ENCODE measurements at regions of chr12 and their contacts with region 1.

Region 1: GRCh38 chr12:121773011-121773777 is 20.3 kb downstream of the RHOF start:
- DNase-seq: peak; percentile 48 to 88 (median 74)
- ATAC-seq: peak; percentile 70 to 87 (median 81)
- H3K4me3 ChIP-seq: no peak overlapping the region
- H3K4me3 Mint-ChIP-seq: no peak overlapping the region
- H3K27ac ChIP-seq: peak overlapping the region; percentile 47
- H3K27ac Mint-ChIP-seq: peak overlapping the region; percentile 31 to 66
- H3K4me1 ChIP-seq: peaks cover 0 to 29% of the 10 kb centered on the region in 2 experiments
- H3K4me1 Mint-ChIP-seq: peaks cover 8 to 15% (median 10%) of the 10 kb centered on the region in 3 donors
- H3K27me3 ChIP-seq: no peaks in the 10 kb centered on the region
- H3K27me3 Mint-ChIP-seq: no peaks in the 10 kb centered on the region

Region 2: GRCh38 chr12:121399391-121400331 is 373.5 kb before region 1 on chr12 and contains the start of gene RNF34:
- CTCF ChIA-PET with region 1: interaction called in 1 of 2 experiments, 3 read pairs
- POLR2A ChIA-PET with region 1: interaction called in 1 of 2 experiments, 10 read pairs
- DNase-seq: peak; percentile 94 to 99 (median 98)
- ATAC-seq: peak; percentile 91 to 93 (median 92)
- H3K4me3 ChIP-seq: peak within 1 kb of the TSS; percentile 81
- H3K4me3 Mint-ChIP-seq: peak within 1 kb of the TSS; percentile 87 to 90 (median 89)
- H3K27ac ChIP-seq: peak within 1 kb of the TSS; percentile 82
- H3K27ac Mint-ChIP-seq: peak within 1 kb of the TSS; percentile 94 to 96
- H3K4me1 ChIP-seq: peaks cover 15 to 24% of the 10 kb centered on the region in 2 experiments
- H3K4me1 Mint-ChIP-seq: peaks cover 41 to 53% (median 49%) of the 10 kb centered on the region in 3 donors
- H3K27me3 ChIP-seq: no peaks in the 10 kb centered on the region
- H3K27me3 Mint-ChIP-seq: no peaks in the 10 kb centered on the region
- total RNA-seq, gene RNF34: 71.8 to 94.5 (median 80.8) TPM

Region 3: GRCh38 chr12:121787063-121788025 is 14.2 kb after region 1 on chr12:
- CTCF ChIA-PET with region 1: interaction called, 11 to 14 read pairs
- POLR2A ChIA-PET with region 1: interaction called in 1 of 2 experiments, 3 read pairs
- DNase-seq: peak in 22 of 35 experiments; percentile 34 to 77 (median 56)
- ATAC-seq: peak in 3 of 4 experiments; percentile 2 to 26 (median 24)
- H3K4me3 ChIP-seq: peak overlapping the region; percentile 58 to 60
- H3K4me3 Mint-ChIP-seq: peak overlapping the region; percentile 73 to 94 (median 77)
- H3K27ac ChIP-seq: peak overlapping the region; percentile 97
- H3K27ac Mint-ChIP-seq: peak overlapping the region; percentile 100
- H3K4me1 ChIP-seq: peaks cover 50 to 99% of the 10 kb centered on the region in 2 experiments
- H3K4me1 Mint-ChIP-seq: peaks cover 87 to 94% (median 94%) of the 10 kb centered on the region in 3 donors
- H3K27me3 ChIP-seq: no peaks in the 10 kb centered on the region
- H3K27me3 Mint-ChIP-seq: no peaks in the 10 kb centered on the region

Measured in T-cell (primary cell).